Activated CD4-positive, alpha-beta T cell treated with anti-CD3 and anti-CD28 coated beads for 36 hours (primary cell): ENCODE measurements at regions of chrX and their contacts with region 1.

Region 1: GRCh38 chrX:103214870-103215424 is at the start of gene BEX4:
- DNase-seq: peak; percentile 89
- ATAC-seq: peak; percentile 98
- H3K4me3 Mint-ChIP-seq: peak within 1 kb of the TSS; percentile 75
- H3K27ac Mint-ChIP-seq: peak within 1 kb of the TSS; percentile 69
- H3K4me1 Mint-ChIP-seq: peaks cover 3% of the 10 kb centered on the region
- H3K27me3 Mint-ChIP-seq: no peaks in the 10 kb centered on the region
- total RNA-seq, gene BEX4: 9.9 to 10.0 TPM

Region 2: GRCh38 chrX:102659790-102660757 is 554.9 kb before region 1 on chrX:
- CTCF ChIA-PET with region 1: no interaction called
- POLR2A ChIA-PET with region 1: no interaction called
- intact Hi-C with region 1: loop called in 1 of 2 experiments (anchors 10 kb)
- DNase-seq: peak; percentile 91
- ATAC-seq: peak; percentile 99
- H3K4me3 Mint-ChIP-seq: peak overlapping the region; percentile 87
- H3K27ac Mint-ChIP-seq: peak overlapping the region; percentile 92
- H3K4me1 Mint-ChIP-seq: peaks cover 23% of the 10 kb centered on the region
- H3K27me3 Mint-ChIP-seq: no peaks in the 10 kb centered on the region

Region 3: GRCh38 chrX:103236296-103236695 is 21.3 kb after region 1 on chrX:
- CTCF ChIA-PET with region 1: no interaction called
- POLR2A ChIA-PET with region 1: no interaction called
- intact Hi-C with region 1: no loop called
- DNase-seq: no peak
- ATAC-seq: no peak
- H3K4me3 Mint-ChIP-seq: no peak overlapping the region
- H3K27ac Mint-ChIP-seq: no peak overlapping the region
- H3K4me1 Mint-ChIP-seq: no peaks in the 10 kb centered on the region
- H3K27me3 Mint-ChIP-seq: no peaks in the 10 kb centered on the region

Region 4: GRCh38 chrX:103248553-103248952 is 33.6 kb after region 1 on chrX:
- CTCF ChIA-PET with region 1: interaction called, 6 read pairs
- POLR2A ChIA-PET with region 1: no interaction called
- intact Hi-C with region 1: loop called (anchors 1 to 2 kb)
- DNase-seq: no peak
- ATAC-seq: no peak
- H3K4me3 Mint-ChIP-seq: no peak overlapping the region
- H3K27ac Mint-ChIP-seq: no peak overlapping the region
- H3K4me1 Mint-ChIP-seq: peaks cover 8% of the 10 kb centered on the region
- H3K27me3 Mint-ChIP-seq: no peaks in the 10 kb centered on the region

Region 5: GRCh38 chrX:103254921-103255493 is 40.1 kb after region 1 on chrX and contains the start of gene TCEAL8:
- CTCF ChIA-PET with region 1: interaction called, 4 read pairs
- POLR2A ChIA-PET with region 1: no interaction called
- intact Hi-C with region 1: loop called in 1 of 2 experiments (anchors 1 kb)
- DNase-seq: peak; percentile 82
- ATAC-seq: peak; percentile 92
- H3K4me3 Mint-ChIP-seq: peak within 1 kb of the TSS; percentile 95
- H3K27ac Mint-ChIP-seq: peak within 1 kb of the TSS; percentile 97
- H3K4me1 Mint-ChIP-seq: peaks cover 18% of the 10 kb centered on the region
- H3K27me3 Mint-ChIP-seq: no peaks in the 10 kb centered on the region
- total RNA-seq, gene TCEAL8: 36.0 to 46.6 TPM

Region 6: GRCh38 chrX:103310542-103311398 is 95.8 kb after region 1 on chrX and contains the start of gene BEX2:
- CTCF ChIA-PET with region 1: no interaction called
- POLR2A ChIA-PET with region 1: no interaction called
- intact Hi-C with region 1: loop called (anchors 2 to 5 kb)
- DNase-seq: peak; percentile 91
- ATAC-seq: peak; percentile 99
- H3K4me3 Mint-ChIP-seq: peak within 1 kb of the TSS; percentile 66
- H3K27ac Mint-ChIP-seq: no peak within 1 kb of the TSS
- H3K4me1 Mint-ChIP-seq: peaks cover 4% of the 10 kb centered on the region
- H3K27me3 Mint-ChIP-seq: no peaks in the 10 kb centered on the region
- total RNA-seq, gene BEX2: 7.4 to 11.5 TPM

Region 7: GRCh38 chrX:103376118-103376978 is 161.4 kb after region 1 on chrX and contains the start of gene BEX3:
- CTCF ChIA-PET with region 1: no interaction called
- POLR2A ChIA-PET with region 1: no interaction called
- intact Hi-C with region 1: no loop called
- DNase-seq: peak; percentile 48
- ATAC-seq: peak; percentile 82
- H3K4me3 Mint-ChIP-seq: peak within 1 kb of the TSS; percentile 70
- H3K27ac Mint-ChIP-seq: peak within 1 kb of the TSS; percentile 45
- H3K4me1 Mint-ChIP-seq: peaks cover 3% of the 10 kb centered on the region
- H3K27me3 Mint-ChIP-seq: no peaks in the 10 kb centered on the region
- total RNA-seq, gene BEX3: 21.1 to 22.0 TPM

Region 8: GRCh38 chrX:103464774-103465117 is 249.8 kb after region 1 on chrX:
- CTCF ChIA-PET with region 1: interaction called, 11 read pairs
- POLR2A ChIA-PET with region 1: no interaction called
- intact Hi-C with region 1: loop called in 1 of 2 experiments (anchors 1 kb)
- DNase-seq: peak; percentile 83
- ATAC-seq: peak; percentile 89
- H3K4me3 Mint-ChIP-seq: peak overlapping the region; percentile 75
- H3K27ac Mint-ChIP-seq: peak overlapping the region; percentile 83
- H3K4me1 Mint-ChIP-seq: peaks cover 4% of the 10 kb centered on the region
- H3K27me3 Mint-ChIP-seq: peaks cover 2% of the 10 kb centered on the region

Region 9: GRCh38 chrX:103674531-103675454 is 459.8 kb after region 1 on chrX:
- CTCF ChIA-PET with region 1: no interaction called
- POLR2A ChIA-PET with region 1: no interaction called
- intact Hi-C with region 1: no loop called
- DNase-seq: no peak
- ATAC-seq: no peak
- H3K4me3 Mint-ChIP-seq: no peak overlapping the region
- H3K27ac Mint-ChIP-seq: no peak overlapping the region
- H3K4me1 Mint-ChIP-seq: peaks cover 5% of the 10 kb centered on the region
- H3K27me3 Mint-ChIP-seq: no peaks in the 10 kb centered on the region